Mucosa of descending colon (tissue), 3 donors: ENCODE measurements at regions of chr9 and their contacts with region 1.

Region 1: GRCh38 chr9:19028835-19029451 is 4.1 kb downstream of the SAXO1 start:
- DNase-seq: peak in 1 of 3 donors; percentile 56
- ATAC-seq: peak; percentile 78
- H3K4me3 ChIP-seq: no peak overlapping the region
- H3K4me1 ChIP-seq: no peaks in the 10 kb centered on the region
- CTCF ChIP-seq: peak; percentile 58

Region 2: DNA sequence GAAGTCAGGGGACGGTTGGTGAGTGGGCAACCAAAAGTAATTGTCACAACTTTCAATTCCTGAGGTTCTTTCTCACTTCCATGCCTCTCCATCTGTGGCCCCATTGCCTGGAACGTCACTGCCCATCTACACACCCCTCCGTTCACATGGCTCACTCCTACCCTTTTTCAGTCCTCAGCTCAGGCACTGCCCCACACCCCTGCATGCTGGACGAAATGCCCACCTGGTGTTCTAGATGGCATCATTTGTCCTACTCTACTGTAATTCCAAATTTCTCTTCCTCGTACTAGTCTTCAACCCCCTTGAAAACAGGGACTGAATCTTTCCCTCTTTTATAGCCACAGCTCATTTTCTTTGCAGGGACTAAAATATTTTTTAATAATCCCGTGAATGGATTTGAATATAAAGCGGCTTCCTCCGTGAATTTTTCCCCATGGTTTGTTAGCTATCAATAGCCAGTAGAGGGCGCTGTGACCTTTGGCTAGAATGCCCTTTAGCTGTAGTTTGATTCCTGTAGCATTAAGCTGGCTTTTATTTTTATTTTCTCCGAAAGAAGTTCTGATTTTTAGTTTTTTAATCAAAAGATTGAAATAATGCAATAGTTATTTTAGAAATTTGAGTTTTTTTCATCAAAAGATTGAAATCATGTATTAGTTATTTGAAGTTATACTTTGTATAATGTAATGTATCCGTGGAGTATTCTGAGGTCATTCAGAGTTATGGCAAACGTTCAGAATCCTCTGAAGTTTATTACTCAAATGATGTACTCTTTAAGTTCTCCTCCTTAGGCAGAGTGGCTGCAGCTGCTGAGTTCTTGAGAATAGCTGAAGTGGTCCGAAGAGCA is 1218.0 kb before region 1 on chr9:
- intact Hi-C with region 1: loop called in 1 of 2 experiments (anchors 10 kb)
- DNase-seq: peak in 1 of 3 donors; percentile 85
- ATAC-seq: peak; percentile 67
- H3K4me3 ChIP-seq: no peak overlapping the region
- H3K4me1 ChIP-seq: peaks cover 7% of the 10 kb centered on the region
- CTCF ChIP-seq: peak; percentile 40

Region 3: GRCh38 chr9:18255158-18255629 is 773.7 kb before region 1 on chr9:
- intact Hi-C with region 1: loop called in 1 of 2 experiments (anchors 5 kb)
- DNase-seq: peak; percentile 50 to 74 (median 70)
- ATAC-seq: peak; percentile 90
- H3K4me3 ChIP-seq: no peak overlapping the region
- H3K4me1 ChIP-seq: no peaks in the 10 kb centered on the region
- CTCF ChIP-seq: peak; percentile 69

Region 4: DNA sequence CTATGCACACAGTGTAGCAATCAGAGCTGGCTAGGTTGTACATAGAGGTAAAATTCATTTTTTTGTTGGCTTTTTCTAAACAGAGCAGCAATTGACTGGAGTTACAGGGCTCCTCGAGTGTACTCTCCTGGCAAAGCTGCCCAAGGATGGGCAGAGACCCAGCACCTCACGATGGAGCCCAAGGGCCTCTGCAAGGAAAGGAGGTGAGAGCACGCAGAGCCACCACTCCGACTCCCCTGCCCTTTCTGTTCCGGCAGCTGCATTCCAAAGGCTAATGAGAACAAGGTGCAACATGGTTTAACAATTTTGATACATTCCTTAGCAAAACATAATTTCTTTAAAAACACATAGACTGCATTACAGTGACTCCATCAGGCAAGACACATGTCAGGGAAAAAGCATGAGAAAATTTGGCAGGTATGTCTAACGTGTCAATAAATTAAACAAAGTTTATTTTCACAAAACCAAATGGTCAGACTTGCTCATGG is 43.4 kb before region 1 on chr9:
- intact Hi-C with region 1: no loop called
- DNase-seq: no peak
- ATAC-seq: no peak
- H3K4me3 ChIP-seq: no peak overlapping the region
- H3K4me1 ChIP-seq: no peaks in the 10 kb centered on the region
- CTCF ChIP-seq: no peak

Region 5: GRCh38 chr9:19239955-19240354 is 211.0 kb after region 1 on chr9:
- intact Hi-C with region 1: no loop called
- DNase-seq: no peak
- ATAC-seq: no peak
- H3K4me3 ChIP-seq: no peak overlapping the region
- H3K4me1 ChIP-seq: no peaks in the 10 kb centered on the region
- CTCF ChIP-seq: no peak